Testis (tissue), 5 donors: ENCODE measurements at regions of chr1 and their contacts with region 1.

Region 1: GRCh38 chr1:66446261-66447001 is 87.5 kb upstream of the SGIP1 start:
- DNase-seq: peak; percentile 30
- H3K4me3 ChIP-seq: no peak overlapping the region
- H3K27ac ChIP-seq: peak overlapping the region in 1 of 2 donors; percentile 63
- H3K4me1 ChIP-seq: peaks cover 7% of the 10 kb centered on the region
- H3K27me3 ChIP-seq: no peaks in the 10 kb centered on the region
- CTCF ChIP-seq: peak; percentile 89 to 92 (median 90)
- POLR2A ChIP-seq: no peak

Region 2: GRCh38 chr1:66265796-66266195 is 180.6 kb before region 1 on chr1:
- intact Hi-C with region 1: loop called (anchors 5 kb)
- DNase-seq: no peak
- H3K4me3 ChIP-seq: no peak overlapping the region
- H3K27ac ChIP-seq: no peak overlapping the region
- H3K4me1 ChIP-seq: peaks cover 21% of the 10 kb centered on the region
- H3K27me3 ChIP-seq: no peaks in the 10 kb centered on the region
- CTCF ChIP-seq: no peak
- POLR2A ChIP-seq: no peak

Region 3: DNA sequence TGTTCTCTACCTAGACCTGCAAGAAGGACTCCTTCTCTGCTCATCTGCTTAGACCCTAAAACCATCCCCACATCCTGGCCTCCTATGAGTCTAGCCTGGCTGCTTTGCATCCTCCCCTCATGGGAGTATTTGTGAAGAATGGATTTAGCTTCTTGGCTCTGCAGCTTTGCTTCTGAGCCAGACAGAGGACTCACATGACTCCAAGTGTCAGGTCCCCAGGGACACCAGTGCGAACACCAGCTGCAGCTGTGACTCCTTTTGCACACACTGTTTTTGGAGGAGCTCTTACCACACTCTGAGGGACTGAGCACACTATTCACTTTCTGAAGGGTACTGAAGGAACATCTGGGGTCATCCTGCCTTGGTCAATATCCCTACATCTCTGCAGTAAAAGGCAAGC is 44.2 kb before region 1 on chr1:
- intact Hi-C with region 1: no loop called
- DNase-seq: peak; percentile 73
- H3K4me3 ChIP-seq: no peak overlapping the region
- H3K27ac ChIP-seq: peak overlapping the region in 1 of 2 donors; percentile 34
- H3K4me1 ChIP-seq: peaks cover 20% of the 10 kb centered on the region
- H3K27me3 ChIP-seq: no peaks in the 10 kb centered on the region
- CTCF ChIP-seq: no peak
- POLR2A ChIP-seq: no peak

Region 4: GRCh38 chr1:66542811-66543767 is 96.7 kb after region 1 on chr1:
- intact Hi-C with region 1: no loop called
- DNase-seq: peak; percentile 92
- H3K4me3 ChIP-seq: no peak overlapping the region
- H3K27ac ChIP-seq: peak overlapping the region; percentile 73 to 77
- H3K4me1 ChIP-seq: peaks cover 25% of the 10 kb centered on the region
- H3K27me3 ChIP-seq: no peaks in the 10 kb centered on the region
- CTCF ChIP-seq: no peak
- POLR2A ChIP-seq: no peak